ENCODE measurements at regions of chr3 and their contacts with region 1.

Region 1: DNA sequence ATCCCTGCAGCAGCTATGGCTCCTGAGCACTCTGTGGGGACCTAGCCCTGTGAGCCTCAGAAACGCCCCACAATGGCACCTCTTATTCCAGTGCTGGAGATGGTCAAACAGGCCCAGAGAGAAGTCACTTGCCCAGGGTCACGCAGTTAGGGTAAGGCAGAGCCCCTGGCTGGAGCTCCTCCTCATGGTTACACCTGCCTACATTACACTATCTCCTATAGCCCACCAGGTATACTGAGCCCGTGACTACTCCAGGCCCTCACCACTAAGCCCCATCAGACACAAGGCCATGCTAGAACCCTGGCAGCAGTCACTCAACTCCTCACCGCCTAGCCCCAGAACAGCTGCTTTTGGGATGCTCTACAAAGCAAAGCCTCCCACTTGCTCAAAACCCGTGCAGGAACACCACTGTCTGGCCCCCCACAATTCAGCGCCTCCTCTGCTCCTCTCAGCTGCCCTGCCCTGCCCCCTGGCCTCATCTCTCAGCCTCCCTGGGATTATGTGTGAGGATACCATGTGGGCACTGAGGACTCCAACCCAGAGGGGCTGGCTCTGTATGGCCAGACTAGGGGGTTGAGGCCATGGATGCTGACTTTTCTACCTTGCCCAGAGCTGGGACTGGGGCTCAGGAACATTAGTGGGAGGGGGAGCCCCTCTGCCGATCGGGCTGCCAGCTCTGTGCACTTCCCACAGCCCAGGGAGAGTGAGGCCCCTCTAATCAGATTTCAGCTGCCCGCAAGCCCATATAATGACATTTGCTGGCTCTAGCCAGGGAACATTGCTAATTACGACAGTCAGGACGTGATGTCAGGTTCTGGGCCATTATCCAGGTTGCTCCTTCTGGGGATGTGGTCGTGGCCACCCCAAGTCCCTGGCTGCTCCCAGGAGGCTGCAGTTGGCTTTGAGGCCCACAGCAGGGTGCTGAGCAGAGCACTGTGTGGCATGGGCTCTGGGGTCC is 4.0 kb downstream of the NT5DC2 start:
- DNase-seq: peak; percentile 65 to 89 (median 77)
- ATAC-seq: peak; percentile 53 to 75 (median 62)
- H3K4me3 ChIP-seq: no peak overlapping the region
- H3K27ac ChIP-seq: peak overlapping the region; percentile 38 to 93 (median 84)
- H3K4me1 ChIP-seq: peaks cover 6 to 90% (median 67%) of the 10 kb centered on the region in 12 donors
- H3K27me3 ChIP-seq: no peaks in the 10 kb centered on the region
- CTCF ChIP-seq: no peak
- POLR2A ChIP-seq: peak in 1 of 2 donors; percentile 10

Region 2: DNA sequence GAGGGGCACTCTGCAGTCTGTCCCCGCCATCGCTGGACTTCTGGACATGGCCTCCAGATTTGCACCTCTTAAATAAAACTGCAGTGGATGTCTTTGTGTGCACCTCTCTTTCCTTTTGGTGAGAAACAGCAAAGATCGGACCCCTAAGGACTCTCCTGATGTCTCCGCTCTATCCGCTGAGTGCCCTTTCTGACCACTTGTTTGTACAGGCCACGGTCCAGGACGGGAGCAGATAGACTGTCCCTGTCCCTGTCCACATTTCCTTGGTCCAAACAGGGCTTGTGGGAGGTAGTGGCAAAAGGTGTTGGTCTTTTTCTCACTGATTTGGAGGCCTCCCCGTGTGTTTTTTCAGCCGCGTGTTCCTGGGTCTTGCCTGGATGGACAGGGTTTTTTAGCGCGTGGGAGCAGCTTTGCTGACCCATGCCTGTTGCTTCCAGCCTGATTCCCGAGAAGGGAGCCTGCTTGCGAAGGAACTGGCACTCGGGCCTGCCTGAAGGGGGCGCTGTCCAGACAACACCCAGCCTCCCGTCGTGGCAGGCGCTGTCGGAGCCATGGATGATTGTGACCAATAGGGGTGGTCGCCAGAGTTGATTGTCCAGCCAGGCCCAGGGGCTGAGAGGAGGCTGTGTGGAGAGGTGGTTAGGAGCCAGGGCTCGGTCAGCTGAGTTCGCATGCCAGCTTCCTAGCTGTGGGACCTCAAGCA is 47.7 kb before region 1 on chr3:
- intact Hi-C with region 1: loop called in 3 of 10 experiments (anchors 5 kb)
- DNase-seq: peak in 2 of 5 donors; percentile 40 to 60
- ATAC-seq: no peak
- H3K4me3 ChIP-seq: no peak overlapping the region
- H3K27ac ChIP-seq: no peak overlapping the region
- H3K4me1 ChIP-seq: peaks cover 5 to 37% (median 24%) of the 10 kb centered on the region in 12 donors
- H3K27me3 ChIP-seq: no peaks in the 10 kb centered on the region
- CTCF ChIP-seq: peak in 9 of 12 donors; percentile 17 to 47 (median 34)
- POLR2A ChIP-seq: no peak

Region 3: DNA sequence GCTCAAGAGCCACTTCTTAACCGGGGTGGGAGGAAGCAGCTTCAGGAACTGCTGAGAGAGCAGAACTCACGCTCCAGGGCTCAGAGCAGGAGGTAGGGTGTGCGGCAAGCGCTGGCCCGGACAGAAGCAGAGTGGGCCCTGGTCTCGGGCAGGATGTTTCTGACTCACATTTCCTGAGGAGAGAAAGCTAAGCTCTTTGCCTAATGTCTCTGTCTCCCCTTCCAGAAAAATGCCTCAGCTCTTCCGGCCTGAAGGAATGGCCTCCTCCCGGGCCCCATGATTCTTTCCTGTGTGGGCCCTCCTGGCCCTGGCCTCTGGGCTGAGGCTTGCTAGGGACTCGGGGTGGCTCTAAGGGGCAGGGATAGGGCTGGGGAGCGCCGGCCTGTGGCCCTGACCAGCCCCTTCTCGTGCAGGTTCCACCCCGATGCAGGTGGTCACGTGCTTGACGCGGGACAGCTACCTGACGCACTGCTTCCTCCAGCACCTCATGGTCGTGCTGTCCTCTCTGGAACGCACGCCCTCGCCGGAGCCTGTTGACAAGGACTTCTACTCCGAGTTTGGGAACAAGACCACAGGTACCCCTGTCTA is 38.6 kb before region 1 on chr3:
- intact Hi-C with region 1: loop called in 4 of 10 experiments (anchors 2 to 5 kb)
- DNase-seq: peak; percentile 63 to 80 (median 65)
- ATAC-seq: peak; percentile 27 to 78 (median 53)
- H3K4me3 ChIP-seq: peak overlapping the region in 1 of 12 donors; percentile 2
- H3K27ac ChIP-seq: peak overlapping the region; percentile 31 to 87 (median 75)
- H3K4me1 ChIP-seq: peaks cover 3 to 71% (median 36%) of the 10 kb centered on the region in 12 donors
- H3K27me3 ChIP-seq: no peaks in the 10 kb centered on the region
- CTCF ChIP-seq: no peak
- POLR2A ChIP-seq: no peak

Measured in heart left ventricle (tissue), 16 donors.